ENCODE measurements at regions of chr22 and their contacts with region 1.

Region 1: DNA sequence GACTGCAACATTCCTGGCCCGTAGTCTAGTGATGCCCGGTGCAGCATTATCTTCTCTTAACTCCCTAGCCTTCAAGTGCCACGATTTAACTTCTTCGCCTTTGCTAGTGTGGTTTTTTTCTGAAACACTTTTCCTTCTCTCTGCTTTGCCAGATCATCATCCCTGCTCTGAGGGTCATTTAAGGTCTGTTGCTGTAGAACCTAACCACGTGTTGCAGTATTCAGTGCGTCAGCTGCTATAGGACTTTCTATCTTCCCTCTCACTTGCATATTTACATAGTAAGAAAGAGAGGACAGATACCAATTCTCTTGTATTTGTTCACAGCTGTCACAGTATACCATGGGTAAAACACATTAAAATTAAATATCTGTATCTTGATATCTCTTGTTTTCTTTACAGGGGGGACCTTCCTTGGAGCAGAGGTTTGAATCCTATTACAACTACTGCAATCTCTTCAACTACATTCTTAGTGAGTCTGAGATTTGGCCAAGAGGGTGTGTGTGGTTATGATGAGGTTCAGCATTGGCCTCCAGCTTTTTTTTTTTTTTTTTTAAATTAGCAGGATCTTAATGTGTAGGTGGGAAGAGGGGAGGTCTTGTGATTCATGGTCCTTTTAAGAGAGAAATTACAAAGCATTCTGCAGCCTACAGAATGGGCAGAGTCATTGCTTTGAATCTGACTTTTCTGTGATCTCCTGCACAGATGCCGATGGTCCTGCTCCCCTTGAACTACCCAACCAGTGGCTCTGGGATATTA is 13.5 kb downstream of the EIF3L start:
- DNase-seq: no peak
- ATAC-seq: no peak
- H3K4me3 ChIP-seq: no peak overlapping the region
- H3K4me3 Mint-ChIP-seq: no peak overlapping the region
- H3K27ac ChIP-seq: no peak overlapping the region
- H3K27ac Mint-ChIP-seq: no peak overlapping the region
- H3K4me1 ChIP-seq: no peaks in the 10 kb centered on the region
- H3K4me1 Mint-ChIP-seq: no peaks in the 10 kb centered on the region
- H3K27me3 ChIP-seq: no peaks in the 10 kb centered on the region
- H3K27me3 Mint-ChIP-seq: no peaks in the 10 kb centered on the region
- CTCF ChIP-seq: no peak

Region 2: GRCh38 chr22:37623075-37624016 is 239.4 kb before region 1 on chr22:
- CTCF ChIA-PET with region 1: interaction called, 4 read pairs
- POLR2A ChIA-PET with region 1: no interaction called
- intact Hi-C with region 1: loop called (anchors 1 kb)
- DNase-seq: peak; percentile 83
- ATAC-seq: peak; percentile 83
- H3K4me3 ChIP-seq: no peak overlapping the region
- H3K4me3 Mint-ChIP-seq: peak overlapping the region; percentile 61
- H3K27ac ChIP-seq: peak overlapping the region; percentile 47 to 52
- H3K27ac Mint-ChIP-seq: peak overlapping the region; percentile 92
- H3K4me1 ChIP-seq: peaks cover 40 to 69% of the 10 kb centered on the region in 2 donors
- H3K4me1 Mint-ChIP-seq: peaks cover 60% of the 10 kb centered on the region
- H3K27me3 ChIP-seq: no peaks in the 10 kb centered on the region
- H3K27me3 Mint-ChIP-seq: no peaks in the 10 kb centered on the region
- CTCF ChIP-seq: peak; percentile 86

Region 3: DNA sequence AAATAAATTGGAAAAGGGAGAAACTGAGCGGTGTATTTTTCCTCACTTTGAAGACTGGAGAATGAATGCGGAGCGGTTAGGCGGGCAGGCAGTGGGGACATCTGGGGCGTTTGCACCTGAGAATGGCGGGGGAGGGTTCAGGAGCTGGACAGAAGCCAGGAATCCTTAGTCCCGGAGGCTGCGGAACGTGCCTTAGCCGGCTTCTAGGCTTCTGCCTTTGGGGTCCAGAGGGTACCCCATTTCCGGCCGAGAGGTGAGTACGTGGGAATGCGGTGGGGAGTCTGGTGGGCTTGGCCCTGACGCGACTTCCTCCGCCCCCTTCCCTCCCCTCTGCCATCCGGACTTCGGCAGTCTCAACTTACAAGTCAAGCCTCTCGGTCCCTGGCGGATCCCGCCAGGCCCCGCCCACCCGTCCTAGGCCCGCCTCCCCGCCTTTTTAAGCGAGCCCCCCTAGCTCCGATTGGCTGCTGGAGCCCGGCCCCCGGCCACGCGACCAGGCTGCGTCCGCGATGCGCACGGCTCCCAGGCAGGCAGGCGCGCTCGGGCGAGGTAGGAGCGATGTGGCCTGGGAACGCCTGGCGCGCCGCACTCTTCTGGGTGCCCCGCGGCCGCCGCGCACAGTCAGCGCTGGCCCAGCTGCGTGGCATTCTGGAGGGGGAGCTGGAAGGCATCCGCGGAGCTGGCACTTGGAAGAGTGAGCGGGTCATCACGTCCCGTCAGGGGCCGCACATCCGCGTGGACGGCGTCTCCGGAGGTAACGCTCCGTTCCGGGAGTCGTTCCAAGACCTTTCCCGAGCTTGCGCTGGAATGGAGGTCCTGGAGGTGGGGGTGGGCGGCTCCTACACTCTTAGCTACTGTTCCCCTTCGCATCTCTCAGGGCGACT is 55.1 kb before region 1 on chr22 and contains the start of gene GCAT:
- CTCF ChIA-PET with region 1: interaction called, 24 read pairs
- POLR2A ChIA-PET with region 1: no interaction called
- intact Hi-C with region 1: no loop called
- DNase-seq: peak; percentile 88
- ATAC-seq: peak; percentile 97
- H3K4me3 ChIP-seq: peak within 1 kb of the TSS; percentile 17 to 61 (median 53)
- H3K4me3 Mint-ChIP-seq: peak within 1 kb of the TSS; percentile 77
- H3K27ac ChIP-seq: no peak within 1 kb of the TSS
- H3K27ac Mint-ChIP-seq: no peak within 1 kb of the TSS
- H3K4me1 ChIP-seq: peaks cover 51 to 60% of the 10 kb centered on the region in 2 donors
- H3K4me1 Mint-ChIP-seq: peaks cover 33% of the 10 kb centered on the region
- H3K27me3 ChIP-seq: peaks cover 0 to 91% (median 51%) of the 10 kb centered on the region in 4 experiments
- H3K27me3 Mint-ChIP-seq: peaks cover 58% of the 10 kb centered on the region
- CTCF ChIP-seq: no peak
- total RNA-seq, gene GCAT: 0.47 TPM in 1 of 2 replicates, not detected in the other

Region 4: DNA sequence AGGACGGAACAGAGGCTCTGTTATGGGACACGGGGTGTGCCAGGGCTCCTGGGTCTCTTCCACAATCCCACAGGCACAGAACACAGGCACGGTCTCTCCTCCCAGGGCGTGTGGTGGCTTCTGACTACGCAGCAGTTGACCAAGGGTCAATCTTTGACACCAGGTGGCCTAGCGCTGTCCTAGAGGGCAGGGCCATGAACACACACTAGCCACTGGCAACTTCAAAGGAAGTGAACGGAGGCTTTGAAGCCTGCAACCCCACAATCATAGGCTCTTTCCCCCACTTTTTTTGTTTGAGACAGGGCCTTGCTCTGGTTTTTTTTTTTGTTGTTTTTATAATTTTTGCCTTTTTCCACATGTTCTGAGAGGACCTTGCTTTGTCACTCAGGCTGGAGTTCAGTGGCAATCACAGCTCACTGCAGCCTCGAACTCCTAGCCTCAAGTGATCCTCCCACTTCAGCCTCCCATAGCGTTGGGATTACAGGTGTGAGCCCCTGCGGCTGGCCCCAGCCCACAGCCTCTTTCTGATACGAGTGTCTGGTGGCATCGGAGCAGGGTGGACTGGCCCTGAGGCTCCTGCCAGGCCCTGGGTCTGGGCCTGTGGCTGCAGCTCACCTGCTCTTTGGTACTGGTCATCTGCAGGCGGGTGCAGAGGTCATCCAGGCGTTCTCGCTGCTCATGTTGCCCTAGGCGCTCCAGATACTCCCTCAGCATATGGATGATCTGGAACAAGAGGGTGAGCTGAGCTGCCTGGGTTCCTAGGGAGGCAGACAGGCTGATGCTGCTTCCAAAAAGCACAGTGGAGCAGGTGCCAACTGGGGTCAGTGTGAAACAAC is 30.5 kb before region 1 on chr22:
- CTCF ChIA-PET with region 1: interaction called, 13 read pairs
- POLR2A ChIA-PET with region 1: no interaction called
- intact Hi-C with region 1: no loop called
- DNase-seq: no peak
- ATAC-seq: no peak
- H3K4me3 ChIP-seq: no peak overlapping the region
- H3K4me3 Mint-ChIP-seq: no peak overlapping the region
- H3K27ac ChIP-seq: no peak overlapping the region
- H3K27ac Mint-ChIP-seq: no peak overlapping the region
- H3K4me1 ChIP-seq: no peaks in the 10 kb centered on the region
- H3K4me1 Mint-ChIP-seq: no peaks in the 10 kb centered on the region
- H3K27me3 ChIP-seq: no peaks in the 10 kb centered on the region
- H3K27me3 Mint-ChIP-seq: no peaks in the 10 kb centered on the region
- CTCF ChIP-seq: no peak

Region 5: GRCh38 chr22:37880668-37881440 is 18.1 kb after region 1 on chr22:
- CTCF ChIA-PET with region 1: interaction called, 28 read pairs
- POLR2A ChIA-PET with region 1: interaction called, 4 read pairs
- intact Hi-C with region 1: no loop called
- DNase-seq: no peak
- ATAC-seq: no peak
- H3K4me3 ChIP-seq: no peak overlapping the region
- H3K4me3 Mint-ChIP-seq: no peak overlapping the region
- H3K27ac ChIP-seq: no peak overlapping the region
- H3K27ac Mint-ChIP-seq: no peak overlapping the region
- H3K4me1 ChIP-seq: no peaks in the 10 kb centered on the region
- H3K4me1 Mint-ChIP-seq: peaks cover 4% of the 10 kb centered on the region
- H3K27me3 ChIP-seq: no peaks in the 10 kb centered on the region
- H3K27me3 Mint-ChIP-seq: no peaks in the 10 kb centered on the region
- CTCF ChIP-seq: no peak